ENCODE measurements at regions of chr7 and their contacts with region 1.

Region 1: GRCh38 chr7:873367-874002 is 2.9 kb upstream of the GET4 start:
- DNase-seq: peak; percentile 72
- ATAC-seq: peak; percentile 43
- H3K4me3 ChIP-seq: no peak overlapping the region
- H3K27ac ChIP-seq: peak overlapping the region; percentile 36
- H3K4me1 ChIP-seq: peaks cover 10 to 26% of the 10 kb centered on the region in 2 experiments; a peak in 3 of 4 replicates
- H3K27me3 ChIP-seq: no peaks in the 10 kb centered on the region
- CTCF ChIP-seq: peak in 2 of 3 experiments; percentile 96 to 99; a peak in 4 of 6 replicates
- POLR2A ChIP-seq: no peak
- RAD21 ChIP-seq: no peak

Region 2: GRCh38 chr7:863106-863505 is 10.4 kb before region 1 on chr7:
- CTCF ChIA-PET with region 1: interaction called, 10 read pairs
- POLR2A ChIA-PET with region 1: no interaction called
- RAD21 ChIA-PET with region 1: no interaction called
- intact Hi-C with region 1: no loop called
- DNase-seq: no peak
- ATAC-seq: no peak
- H3K4me3 ChIP-seq: no peak overlapping the region
- H3K27ac ChIP-seq: no peak overlapping the region
- H3K4me1 ChIP-seq: peaks cover 0 to 4% of the 10 kb centered on the region in 2 experiments; a peak in 1 of 4 replicates
- H3K27me3 ChIP-seq: no peaks in the 10 kb centered on the region
- CTCF ChIP-seq: no peak
- POLR2A ChIP-seq: no peak
- RAD21 ChIP-seq: no peak

Region 3: GRCh38 chr7:936131-937054 is 62.9 kb after region 1 on chr7:
- CTCF ChIA-PET with region 1: no interaction called
- POLR2A ChIA-PET with region 1: no interaction called
- RAD21 ChIA-PET with region 1: no interaction called
- intact Hi-C with region 1: no loop called
- DNase-seq: peak; percentile 71
- ATAC-seq: peak; percentile 85
- H3K4me3 ChIP-seq: peak overlapping the region; percentile 5 to 21; a peak in 2 of 4 replicates
- H3K27ac ChIP-seq: peak overlapping the region; percentile 92
- H3K4me1 ChIP-seq: peaks cover 14 to 18% of the 10 kb centered on the region in 2 experiments
- H3K27me3 ChIP-seq: no peaks in the 10 kb centered on the region
- CTCF ChIP-seq: no peak
- POLR2A ChIP-seq: no peak
- RAD21 ChIP-seq: no peak

Region 4: DNA sequence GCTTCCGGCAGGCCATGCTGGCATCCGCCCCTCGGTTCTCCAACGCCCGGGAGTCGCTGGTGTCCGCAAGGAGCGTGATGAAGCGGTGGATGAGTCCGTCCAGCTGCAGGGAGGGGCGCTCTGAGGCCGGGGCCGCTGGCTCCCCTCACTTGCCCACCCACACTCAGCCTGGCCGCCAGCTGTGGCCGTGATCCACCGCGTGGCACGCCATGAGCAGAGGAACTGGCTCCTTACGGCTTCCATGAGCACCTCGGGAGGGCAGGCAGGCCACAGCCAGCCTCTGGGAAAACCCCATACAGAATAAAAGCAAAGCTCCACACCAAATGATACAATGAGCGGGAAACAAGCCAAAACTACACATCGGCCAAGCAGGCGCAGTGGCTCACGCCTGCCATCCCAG is 601.3 kb after region 1 on chr7:
- CTCF ChIA-PET with region 1: no interaction called
- POLR2A ChIA-PET with region 1: no interaction called
- RAD21 ChIA-PET with region 1: no interaction called
- intact Hi-C with region 1: no loop called
- DNase-seq: no peak
- ATAC-seq: no peak
- H3K4me3 ChIP-seq: no peak overlapping the region
- H3K27ac ChIP-seq: peak overlapping the region; percentile 62; the same call in 1 of the 2 replicates
- H3K4me1 ChIP-seq: peaks cover 3 to 13% of the 10 kb centered on the region in 2 experiments; a peak in 3 of 4 replicates
- H3K27me3 ChIP-seq: no peaks in the 10 kb centered on the region
- CTCF ChIP-seq: no peak
- POLR2A ChIP-seq: no peak
- RAD21 ChIP-seq: no peak